Activated CD8-positive, alpha-beta T cell treated with anti-CD3 and anti-CD28 coated beads for 36 hours (primary cell): ENCODE measurements at regions of chr2 and their contacts with region 1.

Region 1: GRCh38 chr2:159118115-159118858 is 149.8 kb downstream of the TANC1 start:
- DNase-seq: peak; percentile 91
- ATAC-seq: peak; percentile 94
- H3K4me3 Mint-ChIP-seq: no peak overlapping the region
- H3K27ac Mint-ChIP-seq: no peak overlapping the region
- H3K4me1 Mint-ChIP-seq: peaks cover 4% of the 10 kb centered on the region
- H3K27me3 Mint-ChIP-seq: no peaks in the 10 kb centered on the region
- CTCF ChIP-seq: peak; percentile 76

Region 2: DNA sequence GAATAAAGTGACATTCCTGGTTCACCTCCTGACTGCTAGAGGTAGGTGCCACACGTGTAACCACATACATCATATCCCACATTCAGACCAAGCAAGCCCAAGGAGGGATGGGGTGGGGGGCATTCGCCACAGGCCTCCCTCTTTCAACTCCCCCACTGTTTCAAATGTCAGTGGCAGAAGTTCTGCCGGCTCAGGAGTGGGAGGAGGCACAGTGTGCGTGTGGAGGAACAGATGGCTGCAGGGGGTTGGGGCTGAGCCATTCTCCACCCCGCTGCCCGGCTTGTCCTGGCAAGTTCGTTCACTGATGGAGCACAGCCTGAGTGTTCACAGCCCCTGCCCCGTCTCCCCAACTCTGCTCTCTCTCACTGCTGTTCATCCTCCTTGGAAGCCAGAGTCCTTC is 225.3 kb before region 1 on chr2:
- CTCF ChIA-PET with region 1: interaction called, 11 read pairs
- POLR2A ChIA-PET with region 1: no interaction called
- intact Hi-C with region 1: no loop called
- DNase-seq: no peak
- ATAC-seq: no peak
- H3K4me3 Mint-ChIP-seq: no peak overlapping the region
- H3K27ac Mint-ChIP-seq: no peak overlapping the region
- H3K4me1 Mint-ChIP-seq: peaks cover 4% of the 10 kb centered on the region
- H3K27me3 Mint-ChIP-seq: no peaks in the 10 kb centered on the region
- CTCF ChIP-seq: no peak

Region 3: DNA sequence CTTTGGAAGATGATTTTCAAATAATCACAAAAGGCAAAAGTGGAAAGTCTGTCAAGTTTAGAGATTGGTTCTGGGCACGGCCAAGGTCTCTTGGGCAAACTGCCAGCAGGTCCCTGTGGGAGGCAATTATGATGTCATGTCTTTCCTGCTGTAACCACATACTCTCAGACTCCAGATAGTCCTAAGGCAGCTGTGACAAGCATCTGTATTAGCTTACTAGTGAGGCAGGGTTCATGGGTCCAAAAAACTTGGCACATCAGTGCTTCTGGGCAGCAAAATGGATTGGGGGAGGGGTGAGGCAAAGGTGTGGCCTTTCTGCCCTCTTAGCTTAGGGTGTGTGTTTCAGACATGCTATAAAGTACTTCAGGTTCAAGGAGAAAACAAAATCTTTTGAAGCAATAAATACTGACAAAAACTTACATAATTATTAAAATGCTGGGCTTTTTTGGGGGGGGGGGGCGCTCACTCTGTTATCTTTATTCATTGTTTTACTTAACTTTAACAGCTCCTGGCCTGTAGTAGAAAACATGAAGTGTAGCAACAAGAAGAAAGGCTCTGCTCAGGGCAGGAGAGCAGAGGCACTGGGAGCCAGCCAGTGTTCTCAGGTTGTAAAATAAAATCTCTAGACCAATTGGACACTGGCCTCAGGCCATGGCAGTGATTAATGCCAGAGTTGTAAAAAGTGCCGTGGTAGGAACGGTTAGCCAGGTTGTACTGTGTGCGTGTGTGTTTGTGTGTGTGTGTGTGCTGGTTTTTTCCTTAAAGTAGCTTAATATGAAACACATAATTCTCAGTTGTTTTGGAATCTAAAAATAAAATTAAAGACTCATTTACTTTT is 164.1 kb before region 1 on chr2:
- CTCF ChIA-PET with region 1: interaction called, 13 read pairs
- POLR2A ChIA-PET with region 1: no interaction called
- intact Hi-C with region 1: no loop called
- DNase-seq: peak; percentile 62
- ATAC-seq: peak; percentile 55
- H3K4me3 Mint-ChIP-seq: no peak overlapping the region
- H3K27ac Mint-ChIP-seq: no peak overlapping the region
- H3K4me1 Mint-ChIP-seq: peaks cover 14% of the 10 kb centered on the region
- H3K27me3 Mint-ChIP-seq: peaks cover 4% of the 10 kb centered on the region
- CTCF ChIP-seq: no peak

Region 4: DNA sequence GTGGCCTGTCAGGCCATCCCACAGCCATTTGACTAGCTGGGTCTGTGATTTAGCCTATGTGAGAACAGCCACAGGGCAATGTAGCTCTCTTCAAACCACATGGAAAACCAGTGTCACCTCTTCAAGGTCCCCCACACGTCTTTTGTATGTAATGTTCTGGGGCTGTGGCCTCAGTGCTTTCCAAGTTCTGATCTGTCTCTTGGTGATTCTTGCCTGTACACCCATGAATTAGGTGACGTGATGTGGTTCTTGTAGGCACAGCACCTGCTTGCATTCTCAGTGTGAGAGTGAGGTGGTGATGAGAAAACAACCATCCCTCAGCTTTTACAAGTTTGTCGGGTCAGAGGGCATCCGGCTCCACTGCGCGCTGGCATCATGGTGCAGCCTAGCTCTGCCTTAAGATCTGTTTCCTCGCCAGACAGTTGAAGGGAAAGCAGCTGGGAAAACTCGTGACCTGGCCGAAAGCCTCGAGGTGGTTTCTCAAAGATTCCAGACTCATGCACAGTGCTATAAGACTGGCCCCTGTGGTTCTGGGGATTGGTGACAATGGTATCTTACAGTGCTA is 24.0 kb before region 1 on chr2:
- CTCF ChIA-PET with region 1: interaction called, 19 read pairs
- POLR2A ChIA-PET with region 1: no interaction called
- intact Hi-C with region 1: no loop called
- DNase-seq: peak; percentile 65
- ATAC-seq: peak; percentile 77
- H3K4me3 Mint-ChIP-seq: no peak overlapping the region
- H3K27ac Mint-ChIP-seq: peak overlapping the region; percentile 76
- H3K4me1 Mint-ChIP-seq: peaks cover 58% of the 10 kb centered on the region
- H3K27me3 Mint-ChIP-seq: no peaks in the 10 kb centered on the region
- CTCF ChIP-seq: no peak

Region 5: GRCh38 chr2:159146996-159147666 is 28.8 kb after region 1 on chr2:
- CTCF ChIA-PET with region 1: interaction called, 11 read pairs
- POLR2A ChIA-PET with region 1: no interaction called
- intact Hi-C with region 1: no loop called
- DNase-seq: no peak
- ATAC-seq: peak; percentile 39
- H3K4me3 Mint-ChIP-seq: no peak overlapping the region
- H3K27ac Mint-ChIP-seq: no peak overlapping the region
- H3K4me1 Mint-ChIP-seq: peaks cover 11% of the 10 kb centered on the region
- H3K27me3 Mint-ChIP-seq: peaks cover 2% of the 10 kb centered on the region
- CTCF ChIP-seq: no peak

Region 6: GRCh38 chr2:159249984-159250715 is 131.9 kb after region 1 on chr2:
- CTCF ChIA-PET with region 1: no interaction called
- POLR2A ChIA-PET with region 1: no interaction called
- intact Hi-C with region 1: no loop called
- DNase-seq: peak; percentile 9
- ATAC-seq: no peak
- H3K4me3 Mint-ChIP-seq: no peak overlapping the region
- H3K27ac Mint-ChIP-seq: no peak overlapping the region
- H3K4me1 Mint-ChIP-seq: peaks cover 9% of the 10 kb centered on the region
- H3K27me3 Mint-ChIP-seq: no peaks in the 10 kb centered on the region
- CTCF ChIP-seq: no peak